A673 (cell line): ENCODE measurements at regions of chr4 and their contacts with region 1.

Region 1: DNA sequence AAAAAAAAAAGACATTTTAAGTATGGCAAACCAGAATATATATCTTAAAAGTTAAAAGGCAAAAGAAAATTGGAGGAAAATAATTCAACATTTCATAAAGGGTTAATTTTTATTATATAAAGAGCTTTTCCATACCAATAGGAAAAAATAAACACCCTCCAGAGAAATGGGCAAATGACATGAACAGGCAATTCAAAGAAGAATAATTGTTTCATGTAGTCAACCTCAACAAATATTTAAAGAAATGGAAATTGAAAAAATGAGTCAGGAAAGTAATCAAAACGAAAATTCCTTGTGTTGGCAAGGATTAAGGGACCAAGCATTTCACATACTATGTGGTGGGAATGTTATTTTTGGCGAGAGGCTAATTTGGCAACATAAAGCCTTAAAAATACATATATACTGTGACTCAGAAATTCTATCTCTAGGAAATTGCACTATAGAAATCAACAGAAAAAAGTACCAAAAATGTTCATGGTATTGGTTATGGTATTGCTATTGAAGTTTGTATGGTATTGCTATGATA is 87.6 kb downstream of the HAUS3 start:
- DNase-seq: no peak
- H3K4me3 ChIP-seq: no peak overlapping the region
- H3K27ac ChIP-seq: no peak overlapping the region
- H3K4me1 ChIP-seq: no peaks in the 10 kb centered on the region
- H3K27me3 ChIP-seq: no peaks in the 10 kb centered on the region
- CTCF ChIP-seq: no peak

Region 2: DNA sequence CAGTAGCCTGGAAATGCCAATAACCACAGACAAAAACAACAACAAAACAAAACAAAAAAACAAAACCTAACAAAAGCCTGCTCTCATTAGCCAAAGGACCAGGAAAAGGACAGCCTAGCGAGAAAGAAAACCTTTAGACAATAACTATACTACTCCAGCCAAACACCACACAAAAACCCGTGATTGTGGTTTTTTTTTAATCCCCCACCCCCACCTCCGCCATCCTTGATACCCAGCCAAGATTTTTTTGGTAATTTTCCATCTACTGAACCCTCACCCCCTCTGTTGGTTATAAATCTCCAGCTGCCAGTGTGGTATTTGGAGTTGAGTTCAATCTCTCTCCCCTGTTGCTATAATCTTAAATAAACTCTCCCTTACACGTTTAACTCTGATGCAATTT is 11.6 kb before region 1 on chr4:
- CTCF ChIA-PET with region 1: interaction called, 12 read pairs
- POLR2A ChIA-PET with region 1: no interaction called
- intact Hi-C with region 1: no loop called
- DNase-seq: peak; percentile 66
- H3K4me3 ChIP-seq: no peak overlapping the region
- H3K27ac ChIP-seq: peak overlapping the region; percentile 9
- H3K4me1 ChIP-seq: no peaks in the 10 kb centered on the region
- H3K27me3 ChIP-seq: no peaks in the 10 kb centered on the region
- CTCF ChIP-seq: no peak

Region 3: GRCh38 chr4:2262143-2262943 is 108.1 kb after region 1 on chr4:
- CTCF ChIA-PET with region 1: no interaction called
- POLR2A ChIA-PET with region 1: no interaction called
- intact Hi-C with region 1: no loop called
- DNase-seq: peak; percentile 99
- H3K4me3 ChIP-seq: peak overlapping the region; percentile 67
- H3K27ac ChIP-seq: peak overlapping the region; percentile 93
- H3K4me1 ChIP-seq: no peaks in the 10 kb centered on the region
- H3K27me3 ChIP-seq: no peaks in the 10 kb centered on the region
- CTCF ChIP-seq: no peak